HepG2 (cell line): ENCODE measurements at regions of chr2 and their contacts with region 1.

Region 1: DNA sequence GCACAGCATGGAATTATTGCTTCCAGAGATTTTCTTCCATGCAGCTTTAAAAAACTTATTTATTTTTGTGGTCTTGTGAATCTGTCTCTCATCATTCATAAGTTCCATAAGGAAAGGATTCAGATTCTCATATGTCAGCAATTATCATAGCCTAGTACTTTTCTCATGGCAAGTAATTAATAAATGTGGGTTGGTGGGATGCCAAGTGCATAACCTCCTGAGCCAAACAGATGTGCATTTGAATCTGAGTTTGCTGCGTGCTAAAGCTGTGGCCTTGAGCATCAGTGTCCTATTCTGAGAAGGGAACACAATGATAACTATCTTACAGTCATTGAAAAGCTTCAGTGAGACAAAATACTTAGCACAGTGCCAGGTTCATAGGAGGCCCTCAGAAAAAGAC is 331.9 kb downstream of the PDE11A start:
- DNase-seq: no peak
- ATAC-seq: no peak
- H3K4me3 ChIP-seq: no peak overlapping the region
- H3K27ac ChIP-seq: no peak overlapping the region
- H3K4me1 ChIP-seq: no peaks in the 10 kb centered on the region
- H3K27me3 ChIP-seq: peaks cover 0 to 8% of the 10 kb centered on the region in 2 experiments; a peak in 1 of 5 replicates
- CTCF ChIP-seq: no peak
- EP300 ChIP-seq: no peak
- POLR2A ChIP-seq: no peak
- RAD21 ChIP-seq: no peak

Region 2: DNA sequence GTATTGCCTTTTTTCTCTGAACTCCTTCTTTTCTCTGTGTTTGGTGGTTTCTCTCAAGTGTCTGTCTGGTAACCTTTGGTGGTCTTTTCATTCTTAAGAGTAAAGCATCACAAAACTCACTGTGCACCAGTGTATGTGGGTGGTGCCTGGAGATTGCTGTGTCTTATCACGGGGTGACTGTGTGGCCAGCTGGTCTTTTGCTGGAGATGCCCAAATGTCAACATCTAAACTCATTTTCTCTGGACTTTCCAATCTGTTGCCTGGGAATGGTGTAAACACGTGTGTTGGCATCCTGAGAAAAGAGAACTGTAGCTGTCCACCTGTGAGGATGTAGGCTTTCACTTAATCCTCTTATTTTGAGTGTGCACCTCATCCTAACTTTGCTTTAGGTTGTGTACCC is 24.9 kb before region 1 on chr2:
- CTCF ChIA-PET with region 1: no interaction called
- POLR2A ChIA-PET with region 1: no interaction called
- in situ Hi-C with region 1: no loop called
- intact Hi-C with region 1: loop called (anchors 1 kb)
- DNase-seq: no peak
- ATAC-seq: no peak
- H3K4me3 ChIP-seq: no peak overlapping the region
- H3K27ac ChIP-seq: no peak overlapping the region
- H3K4me1 ChIP-seq: peaks cover 3% of the 10 kb centered on the region; the same call in 1 of the 2 replicates
- H3K27me3 ChIP-seq: no peaks in the 10 kb centered on the region
- CTCF ChIP-seq: no peak
- EP300 ChIP-seq: no peak
- POLR2A ChIP-seq: no peak
- RAD21 ChIP-seq: no peak